ENCODE measurements at regions of chr7 and their contacts with region 1.

Region 1: GRCh38 chr7:128425850-128426249 is 16.1 kb upstream of the IMPDH1 start:
- DNase-seq: peak; percentile 29
- ATAC-seq: peak; percentile 75
- H3K4me3 Mint-ChIP-seq: no peak overlapping the region
- H3K27ac Mint-ChIP-seq: no peak overlapping the region
- H3K4me1 Mint-ChIP-seq: no peaks in the 10 kb centered on the region
- H3K27me3 Mint-ChIP-seq: peaks cover 5% of the 10 kb centered on the region
- CTCF ChIP-seq: no peak

Region 2: GRCh38 chr7:128398016-128398840 is 27.6 kb before region 1 on chr7:
- CTCF ChIA-PET with region 1: interaction called, 52 read pairs
- POLR2A ChIA-PET with region 1: no interaction called
- intact Hi-C with region 1: loop called (anchors 1 kb)
- DNase-seq: peak; percentile 42
- ATAC-seq: peak; percentile 54
- H3K4me3 Mint-ChIP-seq: no peak overlapping the region
- H3K27ac Mint-ChIP-seq: no peak overlapping the region
- H3K4me1 Mint-ChIP-seq: no peaks in the 10 kb centered on the region
- H3K27me3 Mint-ChIP-seq: no peaks in the 10 kb centered on the region
- CTCF ChIP-seq: peak; percentile 78

Region 3: DNA sequence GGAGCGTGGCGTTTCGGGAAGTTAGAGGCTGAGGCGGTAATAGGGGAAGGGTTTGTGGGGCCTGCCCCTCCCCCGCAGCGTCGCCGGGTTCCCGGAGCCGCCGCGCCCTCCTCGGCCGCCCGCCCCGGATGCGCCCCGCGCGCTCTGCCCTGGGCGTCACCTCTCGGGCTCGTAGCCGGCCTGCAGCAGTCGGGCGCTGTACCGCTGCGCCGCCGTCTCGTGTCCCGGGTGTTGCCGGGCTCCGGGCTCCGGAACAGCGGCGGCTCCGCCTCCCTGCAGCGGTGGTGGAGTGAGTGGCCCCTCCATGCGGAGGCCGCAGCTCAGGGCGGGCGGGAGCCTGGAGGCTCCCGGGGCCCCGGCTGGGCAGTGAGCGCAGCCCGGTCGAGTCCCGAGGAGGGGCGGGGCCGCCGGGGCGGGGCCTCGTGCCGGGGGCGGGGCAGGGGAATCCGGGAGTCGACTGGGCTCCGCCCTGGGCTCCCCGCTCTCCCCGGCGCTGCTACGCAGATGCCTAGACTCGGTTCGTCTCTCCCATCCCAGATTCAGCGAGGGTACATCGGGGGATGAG is 16.2 kb before region 1 on chr7 and contains the start of gene IMPDH1:
- CTCF ChIA-PET with region 1: interaction called, 46 read pairs
- POLR2A ChIA-PET with region 1: interaction called, 5 read pairs
- intact Hi-C with region 1: loop called (anchors 1 kb)
- DNase-seq: peak; percentile 91
- ATAC-seq: peak; percentile 76
- H3K4me3 Mint-ChIP-seq: peak within 1 kb of the TSS; percentile 91
- H3K27ac Mint-ChIP-seq: peak within 1 kb of the TSS; percentile 72
- H3K4me1 Mint-ChIP-seq: peaks cover 40% of the 10 kb centered on the region
- H3K27me3 Mint-ChIP-seq: no peaks in the 10 kb centered on the region
- CTCF ChIP-seq: no peak
- total RNA-seq, gene IMPDH1: 42.3 and 45.8 TPM in 2 replicates

Region 4: DNA sequence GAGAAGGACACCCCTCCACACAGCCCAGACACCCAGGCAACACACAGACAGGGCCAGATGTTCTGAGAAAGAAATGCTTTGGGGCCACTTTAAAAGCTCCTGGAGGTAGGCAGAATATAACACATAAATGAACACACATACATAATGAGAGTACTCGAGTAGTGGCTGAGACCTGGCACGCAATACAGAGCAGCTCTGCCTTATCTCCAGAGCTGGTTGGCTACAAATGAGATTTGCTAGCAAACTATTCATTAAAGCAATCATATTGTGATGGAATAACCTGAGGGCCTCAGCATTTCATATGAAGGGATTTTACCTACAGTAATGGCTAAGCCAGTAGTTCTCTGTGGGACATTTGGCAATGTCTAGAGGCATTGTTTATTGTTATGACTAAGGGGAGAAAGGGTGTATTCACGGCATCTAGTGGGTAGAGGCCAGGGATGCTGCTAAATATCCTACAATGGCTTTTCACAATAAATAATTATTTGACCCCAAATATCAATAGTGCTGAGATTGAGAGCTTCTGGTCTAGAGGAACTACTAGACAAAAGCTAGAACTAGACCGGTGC is 10.5 kb before region 1 on chr7:
- CTCF ChIA-PET with region 1: interaction called, 46 read pairs
- POLR2A ChIA-PET with region 1: no interaction called
- intact Hi-C with region 1: no loop called
- DNase-seq: no peak
- ATAC-seq: no peak
- H3K4me3 Mint-ChIP-seq: no peak overlapping the region
- H3K27ac Mint-ChIP-seq: no peak overlapping the region
- H3K4me1 Mint-ChIP-seq: peaks cover 2% of the 10 kb centered on the region
- H3K27me3 Mint-ChIP-seq: peaks cover 5% of the 10 kb centered on the region
- CTCF ChIP-seq: no peak

Region 5: GRCh38 chr7:128437426-128438332 is 11.8 kb after region 1 on chr7:
- CTCF ChIA-PET with region 1: interaction called, 28 read pairs
- POLR2A ChIA-PET with region 1: interaction called, 6 read pairs
- intact Hi-C with region 1: no loop called
- DNase-seq: no peak
- ATAC-seq: peak; percentile 95
- H3K4me3 Mint-ChIP-seq: peak overlapping the region; percentile 55
- H3K27ac Mint-ChIP-seq: peak overlapping the region; percentile 91
- H3K4me1 Mint-ChIP-seq: peaks cover 26% of the 10 kb centered on the region
- H3K27me3 Mint-ChIP-seq: no peaks in the 10 kb centered on the region
- CTCF ChIP-seq: no peak

Region 6: DNA sequence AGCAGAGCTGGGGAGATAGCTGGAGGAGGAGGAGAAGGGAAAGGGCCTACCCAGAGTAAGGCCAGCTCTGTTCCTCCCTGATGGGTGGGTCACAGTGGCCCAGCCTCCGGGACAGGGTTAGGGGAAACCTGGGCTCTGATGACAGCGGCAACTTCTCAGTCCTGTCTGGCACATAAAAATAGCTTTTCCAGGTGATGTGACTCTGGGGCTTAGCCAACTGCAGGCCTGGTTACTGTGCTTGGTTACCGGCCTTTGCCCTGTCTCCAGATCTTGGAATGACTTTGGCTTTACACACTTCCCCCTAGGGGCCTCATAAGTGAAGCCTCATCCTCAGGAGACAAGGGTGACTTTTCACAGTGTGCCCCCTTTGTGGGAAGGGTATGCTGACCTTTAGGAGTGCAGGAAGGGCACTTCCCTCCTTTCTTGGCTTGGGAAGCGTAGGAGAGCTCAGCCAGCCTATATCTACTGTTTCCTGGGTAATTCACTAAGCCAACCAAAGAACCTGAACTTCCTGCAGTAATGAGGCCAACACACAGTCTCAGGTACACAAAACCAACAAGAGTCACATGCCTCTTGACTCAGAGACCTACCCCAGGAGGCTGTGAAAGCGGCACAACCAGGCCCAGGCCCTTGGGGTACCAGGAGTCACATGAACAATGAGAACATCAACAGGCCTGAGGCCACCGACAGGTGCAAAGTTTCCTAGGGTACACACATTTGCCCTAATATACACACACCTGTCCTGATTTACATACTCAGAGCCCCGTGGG is 18.2 kb after region 1 on chr7:
- CTCF ChIA-PET with region 1: interaction called, 28 read pairs
- POLR2A ChIA-PET with region 1: interaction called, 3 read pairs
- intact Hi-C with region 1: no loop called
- DNase-seq: no peak
- ATAC-seq: peak; percentile 28
- H3K4me3 Mint-ChIP-seq: no peak overlapping the region
- H3K27ac Mint-ChIP-seq: peak overlapping the region; percentile 3
- H3K4me1 Mint-ChIP-seq: peaks cover 16% of the 10 kb centered on the region
- H3K27me3 Mint-ChIP-seq: no peaks in the 10 kb centered on the region
- CTCF ChIP-seq: no peak

Region 7: DNA sequence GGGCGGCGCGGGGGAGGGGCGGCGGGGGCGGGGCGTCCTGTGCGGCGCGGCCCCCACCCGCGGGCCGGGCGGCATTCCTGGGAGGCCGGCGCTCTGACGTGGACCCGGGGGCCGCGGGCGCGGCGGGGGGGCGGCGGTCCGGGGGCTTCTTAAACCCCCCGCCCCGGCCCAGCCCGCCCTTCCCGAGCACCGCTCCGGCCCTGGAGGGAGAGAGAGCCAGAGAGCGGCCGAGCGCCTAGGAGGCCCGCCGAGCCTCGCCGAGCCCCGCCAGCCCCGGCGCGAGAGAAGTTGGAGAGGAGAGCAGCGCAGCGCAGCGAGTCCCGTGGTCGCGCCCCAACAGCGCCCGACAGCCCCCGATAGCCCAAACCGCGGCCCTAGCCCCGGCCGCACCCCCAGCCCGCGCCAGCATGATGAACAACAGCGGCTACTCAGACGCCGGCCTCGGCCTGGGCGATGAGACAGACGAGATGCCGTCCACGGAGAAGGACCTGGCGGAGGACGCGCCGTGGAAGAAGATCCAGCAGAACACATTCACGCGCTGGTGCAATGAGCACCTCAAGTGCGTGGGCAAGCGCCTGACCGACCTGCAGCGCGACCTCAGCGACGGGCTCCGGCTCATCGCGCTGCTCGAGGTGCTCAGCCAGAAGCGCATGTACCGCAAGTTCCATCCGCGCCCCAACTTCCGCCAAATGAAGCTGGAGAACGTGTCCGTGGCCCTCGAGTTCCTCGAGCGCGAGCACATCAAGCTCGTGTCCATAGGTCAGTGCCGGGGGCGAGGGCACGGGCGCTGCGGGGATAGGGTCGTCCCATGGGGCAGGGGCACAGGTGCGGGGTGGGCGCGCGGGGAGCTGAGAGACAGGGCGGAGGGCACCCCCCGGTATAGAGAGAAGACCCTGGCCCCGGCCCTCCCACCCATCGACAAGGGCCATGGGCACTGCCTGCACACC is 404.7 kb after region 1 on chr7 and contains the start of gene FLNC:
- CTCF ChIA-PET with region 1: no interaction called
- POLR2A ChIA-PET with region 1: no interaction called
- intact Hi-C with region 1: no loop called
- DNase-seq: peak; percentile 39
- ATAC-seq: peak; percentile 60
- H3K4me3 Mint-ChIP-seq: peak within 1 kb of the TSS; percentile 76
- H3K27ac Mint-ChIP-seq: no peak within 1 kb of the TSS
- H3K4me1 Mint-ChIP-seq: peaks cover 24% of the 10 kb centered on the region
- H3K27me3 Mint-ChIP-seq: peaks cover 26% of the 10 kb centered on the region
- CTCF ChIP-seq: no peak
- total RNA-seq, gene FLNC: not detected in 2 replicates

Region 8: GRCh38 chr7:128883622-128884501 is 458.0 kb after region 1 on chr7:
- CTCF ChIA-PET with region 1: no interaction called
- POLR2A ChIA-PET with region 1: no interaction called
- intact Hi-C with region 1: loop called (anchors 1 kb)
- DNase-seq: peak; percentile 82
- ATAC-seq: peak; percentile 85
- H3K4me3 Mint-ChIP-seq: peak overlapping the region; percentile 77
- H3K27ac Mint-ChIP-seq: no peak overlapping the region
- H3K4me1 Mint-ChIP-seq: peaks cover 3% of the 10 kb centered on the region
- H3K27me3 Mint-ChIP-seq: peaks cover 3% of the 10 kb centered on the region
- CTCF ChIP-seq: no peak

Region 9: GRCh38 chr7:128986609-128987008 is 560.8 kb after region 1 on chr7:
- CTCF ChIA-PET with region 1: no interaction called
- POLR2A ChIA-PET with region 1: no interaction called
- intact Hi-C with region 1: no loop called
- DNase-seq: no peak
- ATAC-seq: no peak
- H3K4me3 Mint-ChIP-seq: no peak overlapping the region
- H3K27ac Mint-ChIP-seq: no peak overlapping the region
- H3K4me1 Mint-ChIP-seq: no peaks in the 10 kb centered on the region
- H3K27me3 Mint-ChIP-seq: no peaks in the 10 kb centered on the region
- CTCF ChIP-seq: no peak